HCT116 (cell line): ENCODE measurements at regions of chr15 and their contacts with region 1.

Region 1: DNA sequence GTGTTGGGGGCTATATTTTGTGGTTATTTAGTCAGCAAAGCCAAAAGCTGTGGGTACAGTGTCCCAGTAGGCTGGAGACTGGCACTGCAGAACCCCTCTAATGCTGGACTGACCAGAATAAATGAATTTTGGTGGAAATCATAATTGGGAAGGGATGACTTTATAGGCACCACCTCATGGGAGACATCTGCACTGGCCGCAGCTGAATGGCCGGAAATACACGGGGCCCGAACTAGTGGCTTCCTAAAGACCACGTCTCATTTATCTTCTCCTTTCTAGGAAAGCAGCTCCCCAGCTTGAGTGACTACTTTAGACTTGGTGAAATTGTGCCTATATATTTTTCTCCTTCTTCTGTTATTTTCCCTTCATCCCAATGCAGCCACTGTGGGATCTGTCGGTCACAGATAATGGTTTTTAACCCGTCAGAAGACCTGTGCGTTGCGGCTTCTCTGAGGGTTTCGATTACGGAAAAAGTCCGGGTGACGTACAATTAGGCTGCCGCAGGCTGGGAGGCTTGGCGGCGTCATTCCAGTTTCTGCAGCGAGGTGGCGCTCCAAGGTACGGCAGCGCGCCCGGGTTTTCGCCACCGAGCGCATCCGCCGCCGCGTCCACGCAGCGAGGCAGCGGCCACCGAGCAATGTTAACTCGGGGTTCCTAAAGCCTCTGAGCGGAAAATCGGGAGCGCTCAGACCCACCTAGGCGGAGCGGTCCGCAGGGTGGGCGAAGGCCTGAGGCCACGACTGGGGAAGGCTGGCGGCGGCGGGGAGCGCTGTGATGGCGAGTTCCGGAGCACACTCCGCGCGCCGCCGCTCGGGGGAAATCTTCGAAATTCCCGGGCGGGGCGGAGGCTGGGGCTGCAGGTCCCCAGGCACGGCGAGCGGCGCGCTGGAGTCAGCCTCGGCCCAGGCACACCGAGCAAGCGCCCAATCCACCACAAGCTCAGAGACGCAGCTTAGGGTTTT is 26.3 kb downstream of the NR2F2 start:
- DNase-seq: peak; percentile 72
- ATAC-seq: peak; percentile 86
- H3K4me3 ChIP-seq: peak overlapping the region; percentile 55 to 73
- H3K27ac ChIP-seq: 0 out of 2 replicates have a peak overlapping the region, but pooled peaks have one; percentile 24
- H3K4me1 ChIP-seq: peaks cover 4 to 12% of the 10 kb centered on the region in 2 experiments
- H3K27me3 ChIP-seq: no peaks in the 10 kb centered on the region
- CTCF ChIP-seq: peak; percentile 64 to 91 (median 87)
- POLR2A ChIP-seq: no peak
- RAD21 ChIP-seq: peak; percentile 70

Region 2: GRCh38 chr15:96585484-96586386 is 229.0 kb after region 1 on chr15:
- CTCF ChIA-PET with region 1: interaction called, 4 read pairs
- POLR2A ChIA-PET with region 1: no interaction called
- RAD21 ChIA-PET with region 1: no interaction called
- intact Hi-C with region 1: loop called (anchors 2 kb)
- DNase-seq: no peak
- ATAC-seq: no peak; the same call in 1 of the 2 replicates
- H3K4me3 ChIP-seq: no peak overlapping the region
- H3K27ac ChIP-seq: no peak overlapping the region
- H3K4me1 ChIP-seq: no peaks in the 10 kb centered on the region
- H3K27me3 ChIP-seq: peaks cover 71% of the 10 kb centered on the region
- CTCF ChIP-seq: peak; percentile 33 to 48 (median 35); a peak in 4 of 6 replicates
- POLR2A ChIP-seq: no peak
- RAD21 ChIP-seq: peak; percentile 55

Region 3: DNA sequence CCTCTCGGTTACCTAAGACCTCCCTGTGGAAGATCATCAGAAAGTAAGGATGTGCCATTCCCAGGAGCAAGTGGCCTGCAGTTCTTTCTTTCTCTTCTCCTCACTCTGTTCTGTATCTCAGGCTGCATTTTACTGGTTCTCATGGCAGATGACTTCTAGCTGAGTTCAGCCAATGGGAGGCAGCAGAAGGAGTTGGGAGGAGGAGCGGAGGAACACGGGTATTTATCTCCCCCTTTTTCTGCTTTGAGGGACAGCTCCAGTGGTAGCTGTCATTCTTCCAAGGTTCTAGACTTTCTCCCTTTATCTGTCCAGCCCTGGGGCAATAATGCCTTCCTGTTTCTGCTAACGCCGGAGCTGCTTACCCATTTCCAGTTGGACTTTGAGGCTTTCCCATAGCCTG is 313.6 kb after region 1 on chr15:
- CTCF ChIA-PET with region 1: no interaction called
- POLR2A ChIA-PET with region 1: no interaction called
- RAD21 ChIA-PET with region 1: no interaction called
- intact Hi-C with region 1: no loop called
- DNase-seq: no peak
- ATAC-seq: peak; percentile 30; the same call in 1 of the 2 replicates
- H3K4me3 ChIP-seq: no peak overlapping the region
- H3K27ac ChIP-seq: no peak overlapping the region
- H3K4me1 ChIP-seq: no peaks in the 10 kb centered on the region; a peak in 1 of 4 replicates
- H3K27me3 ChIP-seq: no peaks in the 10 kb centered on the region
- CTCF ChIP-seq: no peak
- POLR2A ChIP-seq: no peak
- RAD21 ChIP-seq: no peak

Region 4: GRCh38 chr15:97234851-97235610 is 878.3 kb after region 1 on chr15:
- CTCF ChIA-PET with region 1: no interaction called
- POLR2A ChIA-PET with region 1: no interaction called
- RAD21 ChIA-PET with region 1: no interaction called
- intact Hi-C with region 1: loop called (anchors 2 kb)
- DNase-seq: peak; percentile 15
- ATAC-seq: peak; percentile 79
- H3K4me3 ChIP-seq: no peak overlapping the region
- H3K27ac ChIP-seq: no peak overlapping the region
- H3K4me1 ChIP-seq: no peaks in the 10 kb centered on the region
- H3K27me3 ChIP-seq: no peaks in the 10 kb centered on the region
- CTCF ChIP-seq: peak; percentile 30 to 78 (median 72); a peak in 5 of 6 replicates
- POLR2A ChIP-seq: no peak
- RAD21 ChIP-seq: peak; percentile 73

Region 5: GRCh38 chr15:97502038-97502437 is 1145.3 kb after region 1 on chr15:
- CTCF ChIA-PET with region 1: no interaction called
- POLR2A ChIA-PET with region 1: no interaction called
- RAD21 ChIA-PET with region 1: no interaction called
- intact Hi-C with region 1: no loop called
- DNase-seq: no peak
- ATAC-seq: no peak
- H3K4me3 ChIP-seq: no peak overlapping the region
- H3K27ac ChIP-seq: no peak overlapping the region
- H3K4me1 ChIP-seq: no peaks in the 10 kb centered on the region
- H3K27me3 ChIP-seq: no peaks in the 10 kb centered on the region
- CTCF ChIP-seq: no peak
- POLR2A ChIP-seq: no peak
- RAD21 ChIP-seq: no peak

Region 6: DNA sequence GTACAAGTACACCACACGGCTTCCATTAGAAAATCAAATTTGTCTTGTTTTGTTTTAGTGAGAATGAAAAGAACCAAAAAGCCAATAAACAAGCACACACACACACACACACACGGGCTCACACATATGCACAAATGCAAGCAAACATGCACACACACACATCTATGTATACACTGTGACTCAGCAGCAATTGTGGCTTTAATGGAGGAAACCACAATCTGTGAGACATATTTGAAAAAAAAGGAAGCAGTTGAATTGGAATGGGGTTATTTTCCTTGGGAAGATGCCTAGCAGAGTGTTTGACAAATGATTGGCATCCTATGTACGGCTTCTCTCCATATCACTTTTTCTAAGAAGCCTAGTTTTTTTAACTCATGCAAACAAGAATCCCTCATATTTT is 1402.6 kb after region 1 on chr15:
- CTCF ChIA-PET with region 1: interaction called, 3 read pairs
- POLR2A ChIA-PET with region 1: no interaction called
- RAD21 ChIA-PET with region 1: no interaction called
- intact Hi-C with region 1: loop called (anchors 5 kb)
- DNase-seq: no peak
- ATAC-seq: no peak
- H3K4me3 ChIP-seq: no peak overlapping the region
- H3K27ac ChIP-seq: no peak overlapping the region
- H3K4me1 ChIP-seq: no peaks in the 10 kb centered on the region
- H3K27me3 ChIP-seq: no peaks in the 10 kb centered on the region
- CTCF ChIP-seq: no peak
- POLR2A ChIP-seq: no peak
- RAD21 ChIP-seq: no peak